Endothelial cell of umbilical vein (primary cell): ENCODE measurements at regions of chr1 and their contacts with region 1.

Region 1: DNA sequence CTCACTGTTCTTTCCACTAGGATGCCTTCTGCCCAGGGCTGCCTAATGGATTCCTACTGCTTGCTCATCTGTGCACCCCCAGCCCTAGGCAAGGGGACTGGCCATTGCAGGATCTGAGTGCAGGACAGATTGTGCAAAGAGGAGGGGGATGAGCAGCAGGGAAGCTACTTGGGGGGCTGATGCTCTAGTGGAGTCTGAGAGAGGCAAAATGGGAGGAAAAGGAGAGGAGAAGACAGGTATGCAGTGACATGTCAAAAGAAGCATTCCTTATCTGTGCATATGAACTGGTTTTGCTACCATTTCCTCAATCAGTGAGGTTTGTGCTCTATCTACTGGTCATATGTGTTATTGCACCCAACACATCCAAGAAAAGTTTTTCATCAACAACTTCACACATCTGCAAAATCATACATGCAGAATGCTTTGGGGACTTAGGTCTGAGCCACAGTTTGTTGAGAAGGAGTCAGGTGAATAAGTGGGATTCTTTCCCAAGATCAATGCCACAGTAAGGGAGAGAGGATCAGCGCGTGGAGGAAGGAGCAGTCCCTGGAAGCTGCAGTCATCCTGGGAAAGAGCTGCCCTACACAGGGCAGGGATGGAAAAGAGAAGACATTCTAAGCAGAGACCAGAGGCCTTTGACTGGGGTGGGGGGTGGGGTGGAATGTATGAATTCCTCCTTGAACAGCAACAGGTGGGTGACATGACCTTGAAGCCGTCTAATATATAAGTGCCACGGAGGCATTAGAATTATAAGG is 14.4 kb downstream of the SLC5A9 start:
- DNase-seq: peak; percentile 26
- H3K4me3 ChIP-seq: no peak overlapping the region
- H3K27ac ChIP-seq: no peak overlapping the region
- H3K4me1 ChIP-seq: no peaks in the 10 kb centered on the region
- H3K27me3 ChIP-seq: no peaks in the 10 kb centered on the region
- CTCF ChIP-seq: peak; percentile 45 to 50
- POLR2A ChIP-seq: no peak

Region 2: GRCh38 chr1:47738560-47739182 is 498.2 kb before region 1 on chr1:
- CTCF ChIA-PET with region 1: no interaction called
- POLR2A ChIA-PET with region 1: no interaction called
- dilution Hi-C with region 1: no loop called
- intact Hi-C with region 1: loop called (anchors 1 kb)
- DNase-seq: peak; percentile 42
- H3K4me3 ChIP-seq: no peak overlapping the region
- H3K27ac ChIP-seq: no peak overlapping the region
- H3K4me1 ChIP-seq: no peaks in the 10 kb centered on the region
- H3K27me3 ChIP-seq: peaks cover 8 to 13% of the 10 kb centered on the region in 2 experiments
- CTCF ChIP-seq: peak; percentile 61 to 84
- POLR2A ChIP-seq: no peak

Region 3: DNA sequence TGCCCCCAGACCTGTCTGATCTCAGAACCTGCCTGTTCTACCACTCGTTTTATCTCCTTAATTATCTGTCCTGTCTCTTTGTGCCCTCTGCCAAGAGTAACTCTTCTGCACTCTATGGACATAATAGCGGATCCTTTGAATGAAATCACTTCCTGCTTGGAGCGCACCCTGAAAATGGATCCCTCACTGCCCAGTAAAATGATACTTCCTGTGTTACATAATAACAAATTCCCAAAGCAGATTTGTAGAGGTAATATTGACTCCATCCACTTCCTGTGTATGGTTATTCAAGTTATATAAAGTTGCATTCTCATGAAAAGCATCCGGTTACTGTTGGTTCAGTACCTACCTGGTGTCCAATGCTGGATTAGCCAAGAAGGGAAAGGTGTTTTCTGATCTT is 485.7 kb before region 1 on chr1:
- CTCF ChIA-PET with region 1: no interaction called
- POLR2A ChIA-PET with region 1: no interaction called
- dilution Hi-C with region 1: no loop called
- intact Hi-C with region 1: no loop called
- DNase-seq: no peak
- H3K4me3 ChIP-seq: no peak overlapping the region
- H3K27ac ChIP-seq: no peak overlapping the region
- H3K4me1 ChIP-seq: no peaks in the 10 kb centered on the region
- H3K27me3 ChIP-seq: no peaks in the 10 kb centered on the region
- CTCF ChIP-seq: no peak
- POLR2A ChIP-seq: no peak

Region 4: GRCh38 chr1:47997289-47998200 is 239.3 kb before region 1 on chr1 and contains the start of gene TRABD2B:
- CTCF ChIA-PET with region 1: interaction called, 6 read pairs
- POLR2A ChIA-PET with region 1: no interaction called
- dilution Hi-C with region 1: no loop called
- intact Hi-C with region 1: loop called (anchors 2 kb)
- DNase-seq: peak; percentile 50
- H3K4me3 ChIP-seq: peak within 1 kb of the TSS in 1 of 3 experiments; percentile 39
- H3K27ac ChIP-seq: no peak within 1 kb of the TSS
- H3K4me1 ChIP-seq: peaks cover 4% of the 10 kb centered on the region
- H3K27me3 ChIP-seq: peaks cover 25 to 35% of the 10 kb centered on the region in 2 experiments
- CTCF ChIP-seq: peak; percentile 91 to 94
- POLR2A ChIP-seq: no peak
- total RNA-seq, gene TRABD2B: not detected in 2 replicates

Region 5: GRCh38 chr1:48093696-48094528 is 143.0 kb before region 1 on chr1:
- CTCF ChIA-PET with region 1: interaction called, 16 read pairs
- POLR2A ChIA-PET with region 1: no interaction called
- dilution Hi-C with region 1: no loop called
- intact Hi-C with region 1: loop called (anchors 1 kb)
- DNase-seq: peak; percentile 30
- H3K4me3 ChIP-seq: no peak overlapping the region
- H3K27ac ChIP-seq: no peak overlapping the region
- H3K4me1 ChIP-seq: no peaks in the 10 kb centered on the region
- H3K27me3 ChIP-seq: no peaks in the 10 kb centered on the region
- CTCF ChIP-seq: peak; percentile 59 to 78
- POLR2A ChIP-seq: no peak

Region 6: GRCh38 chr1:48109390-48110013 is 127.4 kb before region 1 on chr1:
- CTCF ChIA-PET with region 1: interaction called, 10 read pairs
- POLR2A ChIA-PET with region 1: no interaction called
- dilution Hi-C with region 1: no loop called
- intact Hi-C with region 1: loop called (anchors 1 kb)
- DNase-seq: peak; percentile 55
- H3K4me3 ChIP-seq: no peak overlapping the region
- H3K27ac ChIP-seq: no peak overlapping the region
- H3K4me1 ChIP-seq: no peaks in the 10 kb centered on the region
- H3K27me3 ChIP-seq: no peaks in the 10 kb centered on the region
- CTCF ChIP-seq: peak; percentile 64 to 78
- POLR2A ChIP-seq: no peak

Region 7: GRCh38 chr1:48177257-48177656 is 59.6 kb before region 1 on chr1:
- CTCF ChIA-PET with region 1: no interaction called
- POLR2A ChIA-PET with region 1: no interaction called
- dilution Hi-C with region 1: no loop called
- intact Hi-C with region 1: loop called (anchors 1 kb)
- DNase-seq: peak; percentile 30
- H3K4me3 ChIP-seq: no peak overlapping the region
- H3K27ac ChIP-seq: no peak overlapping the region
- H3K4me1 ChIP-seq: no peaks in the 10 kb centered on the region
- H3K27me3 ChIP-seq: no peaks in the 10 kb centered on the region
- CTCF ChIP-seq: no peak
- POLR2A ChIP-seq: no peak

Region 8: GRCh38 chr1:48202030-48202752 is 34.7 kb before region 1 on chr1:
- CTCF ChIA-PET with region 1: interaction called, 22 read pairs
- POLR2A ChIA-PET with region 1: no interaction called
- dilution Hi-C with region 1: no loop called
- intact Hi-C with region 1: loop called (anchors 1 kb)
- DNase-seq: peak; percentile 60
- H3K4me3 ChIP-seq: no peak overlapping the region
- H3K27ac ChIP-seq: no peak overlapping the region
- H3K4me1 ChIP-seq: no peaks in the 10 kb centered on the region
- H3K27me3 ChIP-seq: no peaks in the 10 kb centered on the region
- CTCF ChIP-seq: peak; percentile 73 to 78
- POLR2A ChIP-seq: no peak